Activated CD4-positive, alpha-beta T cell treated with anti-CD3 and anti-CD28 coated beads for 36 hours (primary cell): ENCODE measurements at regions of chr17 and their contacts with region 1.

Region 1: GRCh38 chr17:28916302-28916934 is 13.5 kb upstream of the DHRS13 start:
- DNase-seq: peak; percentile 66
- ATAC-seq: peak; percentile 70
- H3K4me3 Mint-ChIP-seq: no peak overlapping the region
- H3K27ac Mint-ChIP-seq: no peak overlapping the region
- H3K4me1 Mint-ChIP-seq: peaks cover 14% of the 10 kb centered on the region
- H3K27me3 Mint-ChIP-seq: no peaks in the 10 kb centered on the region

Region 2: DNA sequence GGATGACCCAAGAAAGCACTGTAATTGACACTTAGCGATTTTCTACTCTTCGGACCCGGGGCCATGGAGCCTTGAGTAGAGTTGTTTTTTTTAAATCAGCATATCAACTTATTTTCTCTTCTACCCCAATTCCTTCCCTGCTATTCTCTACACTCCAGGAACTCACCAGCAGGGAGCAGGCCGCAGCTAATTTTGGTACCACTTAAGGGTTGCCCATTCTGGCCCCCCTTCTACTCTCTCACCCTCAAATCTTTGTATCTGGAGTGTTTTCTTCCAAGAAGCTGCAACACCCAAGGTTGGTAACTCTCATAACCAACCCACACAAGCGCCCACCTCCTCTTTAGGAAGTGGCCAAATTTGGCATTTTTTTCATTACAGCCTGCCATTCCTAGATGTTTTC is 67.1 kb before region 1 on chr17:
- CTCF ChIA-PET with region 1: interaction called, 4 read pairs
- POLR2A ChIA-PET with region 1: no interaction called
- intact Hi-C with region 1: loop called in 1 of 2 experiments (anchors 1 kb)
- DNase-seq: peak; percentile 46
- ATAC-seq: peak; percentile 75
- H3K4me3 Mint-ChIP-seq: no peak overlapping the region
- H3K27ac Mint-ChIP-seq: no peak overlapping the region
- H3K4me1 Mint-ChIP-seq: peaks cover 5% of the 10 kb centered on the region
- H3K27me3 Mint-ChIP-seq: no peaks in the 10 kb centered on the region

Region 3: GRCh38 chr17:28937044-28937729 is 20.8 kb after region 1 on chr17:
- CTCF ChIA-PET with region 1: interaction called, 11 read pairs
- POLR2A ChIA-PET with region 1: interaction called, 4 read pairs
- intact Hi-C with region 1: no loop called
- DNase-seq: no peak
- ATAC-seq: no peak
- H3K4me3 Mint-ChIP-seq: no peak overlapping the region
- H3K27ac Mint-ChIP-seq: no peak overlapping the region
- H3K4me1 Mint-ChIP-seq: peaks cover 76% of the 10 kb centered on the region
- H3K27me3 Mint-ChIP-seq: no peaks in the 10 kb centered on the region